Left cardiac atrium (tissue), 4 donors: ENCODE measurements at regions of chr17 and their contacts with region 1.

Region 1: GRCh38 chr17:27601069-27601975 is 29.7 kb upstream of the LGALS9 start:
- DNase-seq: peak; percentile 83
- ATAC-seq: peak; percentile 55 to 59

Region 2: GRCh38 chr17:27236717-27237315 is 364.5 kb before region 1 on chr17:
- intact Hi-C with region 1: loop called (anchors 2 to 5 kb)
- DNase-seq: peak; percentile 76
- ATAC-seq: peak; percentile 54 to 62

Region 3: GRCh38 chr17:27353461-27354050 is 247.8 kb before region 1 on chr17:
- intact Hi-C with region 1: loop called (anchors 1 to 5 kb)
- DNase-seq: peak; percentile 94
- ATAC-seq: peak; percentile 92 to 94

Region 4: GRCh38 chr17:27455914-27456680 is 145.2 kb before region 1 on chr17 and contains the start of gene KSR1:
- intact Hi-C with region 1: loop called (anchors 5 kb)
- DNase-seq: peak; percentile 88
- ATAC-seq: peak; percentile 96 to 97
- total RNA-seq, gene KSR1: 15.5 to 23.8 TPM

Region 5: DNA sequence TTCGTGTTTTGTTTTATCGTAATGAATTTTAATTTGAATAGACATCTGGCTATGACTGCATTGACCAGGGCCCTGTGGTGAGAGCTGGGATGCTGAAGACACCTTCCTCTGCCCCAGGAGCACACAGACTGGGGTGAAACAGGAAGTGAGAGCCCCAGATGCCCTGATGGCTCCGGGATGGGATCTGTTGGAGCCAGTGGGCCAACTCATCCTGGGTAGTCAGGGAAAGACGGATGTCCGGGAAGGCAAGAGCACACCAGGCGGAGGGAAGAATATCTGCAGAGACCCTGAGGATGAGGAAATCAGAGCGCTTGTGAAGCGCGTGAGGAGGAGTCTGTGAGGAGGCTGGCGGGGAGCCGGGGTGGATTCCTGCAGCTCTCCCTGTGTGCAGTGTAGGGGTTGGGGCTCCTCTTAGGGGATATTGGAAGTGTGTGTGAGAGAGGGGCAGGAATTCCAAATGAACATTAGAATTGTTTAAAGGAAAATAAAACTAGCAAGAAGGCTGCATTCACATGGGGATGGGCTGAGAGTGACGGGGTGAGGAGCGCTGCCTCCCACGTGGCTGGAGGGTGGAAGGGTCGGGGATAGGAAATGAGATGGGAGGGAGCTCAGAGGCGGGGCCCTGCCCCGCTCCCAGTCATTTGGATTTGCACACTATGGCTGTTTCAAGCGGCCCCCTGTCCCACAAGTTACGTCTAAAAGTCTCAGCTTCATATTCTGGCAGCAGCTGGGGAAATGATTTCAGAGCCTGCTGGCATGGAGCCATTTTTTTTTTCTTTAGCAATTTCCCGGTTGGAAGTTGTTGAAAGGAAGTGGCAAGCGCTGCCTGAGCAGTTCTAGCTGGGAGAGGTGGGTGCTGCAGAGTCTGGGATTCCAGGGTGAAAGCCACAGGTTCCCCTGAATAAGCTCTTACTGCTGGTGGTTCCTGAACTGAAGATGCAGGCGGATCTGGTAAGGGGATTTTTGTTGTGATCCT is 41.5 kb before region 1 on chr17:
- intact Hi-C with region 1: loop called in 1 of 2 experiments (anchors 5 kb)
- DNase-seq: peak; percentile 88
- ATAC-seq: peak; percentile 92